Breast epithelium (tissue), 4 donors: ENCODE measurements at regions of chr20 and their contacts with region 1.

Region 1: GRCh38 chr20:60288949-60289348 is 330.7 kb downstream of the CDH26 start:
- DNase-seq: no peak
- H3K4me3 ChIP-seq: no peak overlapping the region
- H3K27ac ChIP-seq: no peak overlapping the region
- H3K4me1 ChIP-seq: no peaks in the 10 kb centered on the region
- H3K27me3 ChIP-seq: no peaks in the 10 kb centered on the region
- CTCF ChIP-seq: no peak
- POLR2A ChIP-seq: no peak

Region 2: GRCh38 chr20:60268491-60268890 is 20.5 kb before region 1 on chr20:
- intact Hi-C with region 1: loop called (anchors 1 kb)
- DNase-seq: no peak
- H3K4me3 ChIP-seq: no peak overlapping the region
- H3K27ac ChIP-seq: no peak overlapping the region
- H3K4me1 ChIP-seq: no peaks in the 10 kb centered on the region
- H3K27me3 ChIP-seq: no peaks in the 10 kb centered on the region
- CTCF ChIP-seq: no peak
- POLR2A ChIP-seq: no peak